ENCODE measurements at regions of chr16 and their contacts with region 1.

Region 1: GRCh38 chr16:4475880-4476788 is at the start of gene HMOX2:
- DNase-seq: peak; percentile 94 to 96
- H3K4me3 ChIP-seq: peak within 1 kb of the TSS; percentile 72
- H3K4me3 Mint-ChIP-seq: peak within 1 kb of the TSS; percentile 90
- H3K27ac Mint-ChIP-seq: peak within 1 kb of the TSS; percentile 94
- H3K4me1 ChIP-seq: peaks cover 5% of the 10 kb centered on the region
- H3K4me1 Mint-ChIP-seq: no peaks in the 10 kb centered on the region
- H3K27me3 ChIP-seq: no peaks in the 10 kb centered on the region
- H3K27me3 Mint-ChIP-seq: no peaks in the 10 kb centered on the region
- CTCF ChIP-seq: peak in 1 of 2 experiments; percentile 51
- total RNA-seq, gene HMOX2: 35.7 and 36.7 TPM in 2 replicates

Region 2: GRCh38 chr16:4425378-4426020 is 50.6 kb before region 1 on chr16 and contains the start of gene DNAJA3:
- CTCF ChIA-PET with region 1: no interaction called
- POLR2A ChIA-PET with region 1: no interaction called
- intact Hi-C with region 1: loop called (anchors 5 kb)
- DNase-seq: peak; percentile 89 to 91
- H3K4me3 ChIP-seq: peak within 1 kb of the TSS; percentile 50
- H3K4me3 Mint-ChIP-seq: peak within 1 kb of the TSS; percentile 94
- H3K27ac Mint-ChIP-seq: peak within 1 kb of the TSS; percentile 99
- H3K4me1 ChIP-seq: peaks cover 9% of the 10 kb centered on the region; the same call in 1 of the 2 replicates
- H3K4me1 Mint-ChIP-seq: peaks cover 6% of the 10 kb centered on the region
- H3K27me3 ChIP-seq: no peaks in the 10 kb centered on the region
- H3K27me3 Mint-ChIP-seq: no peaks in the 10 kb centered on the region
- CTCF ChIP-seq: no peak
- total RNA-seq, gene DNAJA3: 77.1 and 79.6 TPM in 2 replicates

Region 3: GRCh38 chr16:4500272-4500671 is 24.1 kb after region 1 on chr16:
- CTCF ChIA-PET with region 1: no interaction called
- POLR2A ChIA-PET with region 1: interaction called, 3 read pairs
- intact Hi-C with region 1: loop called (anchors 2 kb)
- DNase-seq: no peak
- H3K4me3 ChIP-seq: no peak overlapping the region
- H3K4me3 Mint-ChIP-seq: no peak overlapping the region
- H3K27ac Mint-ChIP-seq: peak overlapping the region; percentile 42
- H3K4me1 ChIP-seq: peaks cover 16% of the 10 kb centered on the region
- H3K4me1 Mint-ChIP-seq: peaks cover 26% of the 10 kb centered on the region
- H3K27me3 ChIP-seq: no peaks in the 10 kb centered on the region
- H3K27me3 Mint-ChIP-seq: no peaks in the 10 kb centered on the region
- CTCF ChIP-seq: no peak